Activated CD4-positive, alpha-beta memory T cell treated with anti-CD3 and anti-CD28 coated beads for 36 hours (primary cell): ENCODE measurements at regions of chr19 and their contacts with region 1.

Region 1: GRCh38 chr19:19145684-19146608 is 7.7 kb upstream of the TMEM161A start:
- DNase-seq: peak; percentile 91
- H3K4me3 Mint-ChIP-seq: no peak overlapping the region
- H3K27ac Mint-ChIP-seq: no peak overlapping the region
- H3K4me1 Mint-ChIP-seq: no peaks in the 10 kb centered on the region
- H3K27me3 Mint-ChIP-seq: no peaks in the 10 kb centered on the region

Region 2: DNA sequence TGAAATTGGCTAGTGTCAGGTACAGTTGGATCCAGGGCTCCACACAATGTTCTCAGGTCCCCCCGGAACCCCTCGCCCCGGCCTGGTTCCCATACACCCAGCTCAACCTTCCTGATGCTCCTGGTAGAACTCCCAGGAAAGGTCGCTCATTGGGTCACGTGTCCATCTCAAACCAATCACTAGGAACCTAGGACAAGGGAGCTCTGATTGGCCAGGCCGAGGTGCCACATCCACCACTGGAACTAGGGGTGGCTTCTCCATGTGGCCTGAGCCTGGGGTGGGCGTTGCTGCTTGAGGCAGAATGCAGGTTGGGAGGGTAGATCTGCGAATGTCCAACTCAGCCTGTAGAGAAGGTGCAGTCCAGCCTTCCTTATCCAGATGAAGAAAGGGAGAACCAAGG is 31.0 kb after region 1 on chr19:
- CTCF ChIA-PET with region 1: interaction called, 33 read pairs
- POLR2A ChIA-PET with region 1: no interaction called
- intact Hi-C with region 1: loop called (anchors 1 kb)
- DNase-seq: no peak
- H3K4me3 Mint-ChIP-seq: no peak overlapping the region
- H3K27ac Mint-ChIP-seq: no peak overlapping the region
- H3K4me1 Mint-ChIP-seq: no peaks in the 10 kb centered on the region
- H3K27me3 Mint-ChIP-seq: no peaks in the 10 kb centered on the region

Region 3: DNA sequence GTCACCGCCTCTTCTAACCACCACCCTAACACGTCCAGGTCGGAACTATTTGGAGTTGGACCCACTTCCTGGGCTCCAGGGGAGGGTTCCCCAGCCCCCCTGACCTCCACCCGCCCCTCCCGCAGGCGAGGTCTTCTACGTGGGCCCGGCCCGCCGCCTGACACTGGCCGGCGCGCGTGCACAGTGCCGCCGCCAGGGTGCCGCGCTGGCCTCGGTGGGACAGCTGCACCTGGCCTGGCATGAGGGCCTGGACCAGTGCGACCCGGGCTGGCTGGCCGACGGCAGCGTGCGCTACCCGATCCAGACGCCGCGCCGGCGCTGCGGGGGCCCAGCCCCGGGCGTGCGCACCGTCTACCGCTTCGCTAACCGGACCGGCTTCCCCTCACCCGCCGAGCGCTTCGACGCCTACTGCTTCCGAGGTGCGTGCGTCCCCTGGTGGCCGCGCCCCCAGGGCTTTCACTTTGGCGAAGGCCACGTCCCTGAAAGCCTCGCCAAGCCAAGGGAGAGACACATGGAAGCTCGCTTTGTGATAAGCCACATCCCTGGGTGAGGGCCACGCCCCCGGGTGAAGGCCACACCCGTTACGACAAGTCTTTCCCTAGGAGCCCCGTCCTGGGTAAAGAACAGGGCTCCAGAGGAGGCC is 79.0 kb after region 1 on chr19:
- CTCF ChIA-PET with region 1: interaction called, 4 read pairs
- POLR2A ChIA-PET with region 1: no interaction called
- intact Hi-C with region 1: loop called (anchors 1 kb)
- DNase-seq: peak; percentile 83
- H3K4me3 Mint-ChIP-seq: peak overlapping the region; percentile 62
- H3K27ac Mint-ChIP-seq: no peak overlapping the region
- H3K4me1 Mint-ChIP-seq: no peaks in the 10 kb centered on the region
- H3K27me3 Mint-ChIP-seq: peaks cover 13% of the 10 kb centered on the region

Region 4: DNA sequence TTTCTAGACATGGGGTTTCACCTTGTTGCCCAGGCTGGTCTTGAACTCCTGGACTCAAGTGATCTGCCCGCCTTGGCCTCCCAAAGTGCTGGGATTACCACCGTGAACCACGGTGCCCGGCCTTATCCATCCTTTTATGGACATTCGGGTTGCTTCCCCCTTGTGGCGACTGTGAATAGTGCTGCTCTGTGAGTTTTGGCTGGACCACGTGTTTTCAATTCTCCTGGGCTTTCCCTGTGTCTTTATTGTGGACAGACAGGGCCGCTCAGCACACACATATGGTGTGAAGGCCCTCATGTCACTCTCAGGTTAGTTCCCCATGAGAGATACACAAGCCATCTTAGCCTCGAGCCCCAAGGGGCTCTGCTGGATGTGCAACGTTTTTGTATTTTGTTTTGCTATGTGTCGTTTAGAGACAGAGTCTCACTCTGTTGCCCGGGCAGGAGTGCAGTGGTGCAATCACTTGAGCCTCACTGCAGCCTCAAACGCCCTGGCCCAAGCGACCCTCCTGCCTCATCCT is 215.2 kb after region 1 on chr19:
- CTCF ChIA-PET with region 1: interaction called, 5 read pairs
- POLR2A ChIA-PET with region 1: no interaction called
- intact Hi-C with region 1: loop called (anchors 1 kb)
- DNase-seq: peak; percentile 88
- H3K4me3 Mint-ChIP-seq: no peak overlapping the region
- H3K27ac Mint-ChIP-seq: no peak overlapping the region
- H3K4me1 Mint-ChIP-seq: peaks cover 29% of the 10 kb centered on the region
- H3K27me3 Mint-ChIP-seq: no peaks in the 10 kb centered on the region